OCI-LY7 (cell line): ENCODE measurements at regions of chr16 and their contacts with region 1.

Region 1: GRCh38 chr16:1677802-1678496 is at the start of gene JPT2:
- DNase-seq: peak; percentile 98
- H3K4me3 ChIP-seq: peak within 1 kb of the TSS; percentile 97
- H3K27ac ChIP-seq: peak within 1 kb of the TSS; percentile 57
- H3K4me1 ChIP-seq: peaks cover 22% of the 10 kb centered on the region
- CTCF ChIP-seq: no peak
- total RNA-seq, gene JPT2: 48.3 and 67.4 TPM in 2 replicates

Region 2: GRCh38 chr16:1772736-1773584 is 95.0 kb after region 1 on chr16 and contains the starts of genes EME2 and MRPS34:
- CTCF ChIA-PET with region 1: no interaction called
- POLR2A ChIA-PET with region 1: no interaction called
- intact Hi-C with region 1: loop called (anchors 1 kb)
- DNase-seq: peak; percentile 92
- H3K4me3 ChIP-seq: peak within 1 kb of the TSS; percentile 98
- H3K27ac ChIP-seq: peak within 1 kb of the TSS; percentile 89
- H3K4me1 ChIP-seq: peaks cover 23% of the 10 kb centered on the region
- CTCF ChIP-seq: peak; percentile 80
- total RNA-seq, gene EME2: 22.0 and 23.8 TPM in 2 replicates
- total RNA-seq, gene MRPS34: 170 and 190 TPM in 2 replicates